Caco-2 (cell line): ENCODE measurements at regions of chr4 and their contacts with region 1.

Region 1: DNA sequence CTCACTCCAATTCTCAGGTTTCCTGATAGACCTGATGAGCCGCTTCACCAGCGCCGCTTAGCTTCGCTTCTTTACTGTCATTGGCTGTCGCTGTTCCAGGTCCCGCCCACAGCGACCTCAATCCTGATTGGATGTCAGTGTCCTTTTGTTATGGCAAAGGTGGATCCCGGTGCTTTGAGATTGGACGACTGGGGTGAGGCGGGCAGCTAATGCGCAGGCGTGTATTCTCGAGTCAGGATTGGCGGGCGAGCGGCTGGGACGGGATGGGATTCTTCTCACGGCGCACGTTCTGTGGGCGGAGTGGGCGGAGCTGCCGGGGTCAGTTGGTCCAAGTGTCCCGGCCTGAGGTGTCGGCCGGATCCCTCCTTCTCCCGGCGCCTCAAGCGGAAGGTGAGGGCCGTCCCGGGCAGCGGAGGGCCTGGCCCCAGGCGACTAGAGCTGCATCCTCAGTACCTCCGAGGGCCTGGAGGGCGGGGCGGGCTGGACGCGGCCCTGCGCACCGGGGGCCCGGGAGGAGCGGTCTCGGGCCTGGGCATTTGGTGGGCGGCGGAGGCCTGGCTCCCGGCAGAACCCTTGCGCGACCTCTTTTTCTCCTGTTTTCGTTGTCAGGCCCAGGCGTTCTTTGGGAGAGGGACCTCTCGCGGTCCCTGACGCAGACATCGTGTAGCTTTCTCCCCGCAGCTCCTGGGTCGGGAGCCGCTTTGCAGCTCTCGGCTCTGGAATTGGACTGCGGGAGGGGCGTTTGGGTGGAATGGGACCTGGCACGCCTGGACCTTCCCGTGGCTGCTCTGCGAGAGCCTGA is at the start of gene SCOC:
- DNase-seq: peak; percentile 98 to 99
- H3K4me3 ChIP-seq: peak within 1 kb of the TSS; percentile 90
- H3K4me3 Mint-ChIP-seq: no peak within 1 kb of the TSS
- H3K27ac Mint-ChIP-seq: no peak within 1 kb of the TSS
- H3K4me1 ChIP-seq: peaks cover 19% of the 10 kb centered on the region
- H3K4me1 Mint-ChIP-seq: peaks cover 7% of the 10 kb centered on the region
- H3K27me3 ChIP-seq: no peaks in the 10 kb centered on the region
- H3K27me3 Mint-ChIP-seq: no peaks in the 10 kb centered on the region
- CTCF ChIP-seq: no peak
- total RNA-seq, gene SCOC: 36.8 and 39.6 TPM in 2 replicates

Region 2: DNA sequence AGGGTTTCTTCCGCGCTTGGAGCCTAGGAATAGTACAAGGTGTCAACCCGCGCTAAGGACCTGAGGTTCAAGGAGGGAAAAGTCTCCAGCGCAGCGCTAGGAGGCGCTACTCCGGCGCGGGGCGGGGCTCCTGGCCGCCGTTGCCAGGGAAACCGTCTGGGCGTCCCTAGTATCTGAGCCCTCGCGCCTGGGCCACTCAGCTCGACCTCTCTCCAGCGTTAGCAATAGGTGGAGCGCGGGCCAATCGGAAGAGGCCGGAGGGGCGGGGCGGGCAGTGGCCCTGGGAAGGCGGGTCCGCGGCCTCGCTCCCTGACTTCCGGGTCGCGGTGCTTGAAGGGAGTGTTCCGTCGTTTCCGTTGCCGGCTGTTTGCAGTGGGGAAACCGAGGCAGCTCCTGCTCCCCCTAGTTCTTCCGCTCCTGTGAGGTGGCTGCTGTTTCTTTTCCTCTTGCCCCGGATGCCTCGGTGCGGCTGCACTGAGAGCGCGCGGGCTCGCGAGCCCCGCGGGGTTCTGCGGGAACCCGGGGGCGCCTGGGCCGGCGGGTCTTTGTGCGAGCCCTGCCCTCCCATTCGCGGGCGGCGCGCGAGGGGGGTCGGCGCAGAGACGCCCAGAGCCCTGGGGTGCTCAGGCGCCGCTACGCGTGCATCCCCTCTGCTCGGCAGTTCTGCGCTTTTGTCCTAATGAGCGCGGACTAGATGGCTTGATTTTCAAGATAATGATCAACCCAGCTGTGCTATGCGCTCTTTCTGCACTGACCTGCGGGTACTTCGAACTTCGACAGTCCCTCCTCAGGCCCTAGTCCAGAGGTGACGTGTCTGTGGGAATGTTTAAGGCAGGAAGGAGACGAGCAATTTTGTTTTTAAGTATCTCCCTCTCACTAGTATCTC is 150.6 kb after region 1 on chr4 and contains the start of gene ELMOD2:
- CTCF ChIA-PET with region 1: interaction called, 5 read pairs
- POLR2A ChIA-PET with region 1: interaction called, 5 read pairs
- intact Hi-C with region 1: loop called (anchors 5 kb)
- DNase-seq: peak; percentile 97 to 98
- H3K4me3 ChIP-seq: peak within 1 kb of the TSS; percentile 85
- H3K4me3 Mint-ChIP-seq: peak within 1 kb of the TSS; percentile 75
- H3K27ac Mint-ChIP-seq: peak within 1 kb of the TSS; percentile 39
- H3K4me1 ChIP-seq: peaks cover 5% of the 10 kb centered on the region; the same call in 1 of the 2 replicates
- H3K4me1 Mint-ChIP-seq: peaks cover under 1% of the 10 kb centered on the region
- H3K27me3 ChIP-seq: no peaks in the 10 kb centered on the region
- H3K27me3 Mint-ChIP-seq: no peaks in the 10 kb centered on the region
- CTCF ChIP-seq: peak; percentile 85 to 90
- total RNA-seq, gene ELMOD2: 26.2 and 28.1 TPM in 2 replicates